Posterior vena cava (tissue), 2 donors: ENCODE measurements at regions of chr19 and their contacts with region 1.

Region 1: GRCh38 chr19:47608074-47608918 is 638 bp upstream of the BICRA start:
- DNase-seq: peak; percentile 97

Region 2: DNA sequence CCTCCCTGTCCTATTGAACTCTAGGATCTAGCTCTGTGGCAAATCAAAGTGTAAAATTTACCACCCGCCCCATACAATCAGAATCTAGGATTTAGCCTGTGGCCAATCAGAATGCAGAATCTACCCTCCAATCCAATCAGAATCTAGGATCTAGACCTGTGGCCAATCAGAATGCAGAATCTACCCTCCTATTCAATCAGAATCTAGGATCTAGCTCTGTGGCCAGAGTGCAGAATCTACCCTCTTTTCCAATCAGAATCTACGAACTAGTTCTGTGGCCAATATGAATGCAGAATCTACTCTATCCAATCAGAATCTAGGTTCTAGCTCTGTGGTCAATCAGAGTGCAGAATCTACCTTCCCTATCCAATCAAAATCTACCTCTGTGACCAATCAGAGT is 917.2 kb before region 1 on chr19:
- intact Hi-C with region 1: no loop called
- DNase-seq: no peak

Region 3: GRCh38 chr19:47514869-47515588 is 93.3 kb before region 1 on chr19 and contains the start of gene NAPA:
- intact Hi-C with region 1: loop called in 1 of 2 experiments (anchors 5 kb)
- DNase-seq: peak; percentile 100
- total RNA-seq, gene NAPA: 75.8 to 83.8 TPM

Region 4: DNA sequence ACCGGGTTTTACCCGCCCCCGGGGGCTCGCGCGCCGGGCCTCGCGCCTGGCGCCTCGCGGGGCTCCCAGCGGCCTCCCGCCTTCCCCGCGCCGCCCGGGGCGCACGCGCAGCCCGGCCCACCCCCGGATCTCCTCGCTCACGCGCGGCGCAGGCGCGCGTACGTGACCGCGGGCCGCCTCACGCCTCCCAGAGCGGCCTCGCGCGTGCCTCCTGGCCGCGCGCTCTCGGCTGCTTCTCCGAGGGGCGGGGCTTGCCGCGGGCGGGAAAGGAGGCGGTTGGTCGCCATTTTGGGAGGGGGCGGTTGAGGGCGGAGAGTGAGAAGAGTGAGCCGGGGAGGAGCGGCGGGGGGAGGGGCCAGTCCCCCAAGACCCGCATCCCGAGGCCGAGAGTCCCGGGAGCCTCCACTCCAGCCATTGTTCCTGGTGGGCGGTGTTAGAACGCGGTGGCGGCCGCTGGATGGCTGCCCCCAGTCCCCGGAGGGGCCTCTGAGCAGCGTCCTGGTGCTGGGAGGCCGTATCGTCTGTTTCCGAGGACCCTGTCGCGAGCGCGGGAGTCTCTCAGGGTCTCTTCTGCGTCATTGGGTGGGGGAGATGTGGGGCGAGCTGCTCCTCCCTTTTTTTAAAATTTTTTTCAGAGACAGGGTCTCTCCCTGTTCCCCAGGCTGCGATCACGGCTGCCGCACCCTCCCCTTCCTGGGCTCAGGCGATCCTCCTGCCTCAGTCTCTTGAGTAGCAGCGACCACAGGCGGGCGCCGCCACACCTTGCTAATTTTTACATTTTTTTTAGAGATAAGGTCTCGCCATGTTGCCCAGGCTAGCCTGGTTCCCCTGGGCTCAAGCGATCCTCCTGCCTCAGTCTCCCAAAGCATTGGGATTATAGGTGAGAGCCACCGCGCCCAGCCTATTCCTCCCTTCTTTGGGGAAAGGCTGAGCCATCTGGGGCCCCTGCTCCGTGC is 34.9 kb before region 1 on chr19 and contains the start of gene ZNF541:
- intact Hi-C with region 1: no loop called
- DNase-seq: peak; percentile 91
- total RNA-seq, gene ZNF541: 0.19 to 0.24 TPM

Region 5: GRCh38 chr19:47644762-47645482 is 36.6 kb after region 1 on chr19:
- intact Hi-C with region 1: no loop called
- DNase-seq: no peak

Region 6: GRCh38 chr19:47663841-47664771 is 55.8 kb after region 1 on chr19:
- intact Hi-C with region 1: loop called (anchors 5 kb)
- DNase-seq: peak; percentile 88